A549 (cell line): ENCODE measurements at regions of chr14 and their contacts with region 1.

Region 1: DNA sequence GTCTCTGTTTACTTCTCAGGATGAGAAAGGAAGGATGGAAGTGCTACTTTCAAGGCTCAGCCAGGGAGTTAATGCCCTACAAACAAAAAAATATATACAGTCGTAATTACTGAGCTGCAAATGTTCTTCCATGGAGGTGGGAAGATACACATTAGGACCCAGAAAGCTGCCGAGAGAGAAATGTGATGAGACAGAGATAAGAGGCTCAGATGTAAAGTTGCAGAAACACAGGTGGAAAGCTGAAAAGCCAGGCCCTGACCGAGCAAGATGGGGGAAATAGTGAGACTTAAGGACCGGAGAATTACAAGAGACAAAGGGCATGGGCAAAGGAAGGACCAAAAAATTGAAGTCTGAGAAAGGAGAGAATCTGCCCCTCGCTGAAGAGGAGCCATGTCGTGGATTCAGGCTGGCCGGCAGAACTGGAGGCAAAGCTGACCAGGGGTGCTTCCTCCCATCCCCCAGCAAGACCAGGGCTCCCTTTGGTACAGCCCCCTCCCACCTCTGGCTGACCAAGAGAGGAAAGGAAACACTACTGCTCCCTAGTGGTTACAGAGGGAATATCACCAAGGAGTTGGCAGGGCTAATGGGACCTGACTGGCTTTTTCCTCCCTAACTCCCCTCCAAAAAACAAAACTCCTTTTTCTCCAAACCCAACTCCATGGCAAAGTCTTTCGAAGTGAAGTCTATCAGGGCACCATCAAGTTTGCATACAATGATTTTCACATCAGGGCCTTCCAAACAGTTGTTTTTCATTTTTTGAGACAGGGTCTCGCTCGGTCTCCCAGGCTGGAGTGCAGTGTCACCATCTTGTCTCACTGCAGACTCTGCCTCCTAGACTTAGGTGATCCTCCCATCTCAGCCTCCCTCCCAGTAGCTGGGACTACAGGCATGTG is 12.1 kb downstream of the ZFHX2 start:
- DNase-seq: peak; percentile 45 to 61
- ATAC-seq: peak; percentile 79 to 91; a peak in 5 of 6 replicates
- H3K4me3 ChIP-seq: no peak overlapping the region
- H3K27ac ChIP-seq: no peak overlapping the region
- H3K4me1 ChIP-seq: no peaks in the 10 kb centered on the region
- CTCF ChIP-seq: peak; percentile 59
- EP300 ChIP-seq: no peak
- POLR2A ChIP-seq: no peak
- RAD21 ChIP-seq: peak; percentile 37 to 51; a peak in 2 of 5 replicates

Region 2: GRCh38 chr14:23483236-23483854 is 56.1 kb before region 1 on chr14:
- CTCF ChIA-PET with region 1: interaction called, 74 read pairs
- POLR2A ChIA-PET with region 1: interaction called, 5 read pairs
- DNase-seq: peak; percentile 40 to 60
- ATAC-seq: peak; percentile 79 to 96
- H3K4me3 ChIP-seq: no peak overlapping the region
- H3K27ac ChIP-seq: no peak overlapping the region
- H3K4me1 ChIP-seq: no peaks in the 10 kb centered on the region
- CTCF ChIP-seq: peak; percentile 34; the same call in 2 of the 3 replicates
- EP300 ChIP-seq: no peak
- POLR2A ChIP-seq: no peak
- RAD21 ChIP-seq: peak in 1 of 2 experiments; percentile 67; a peak in 3 of 5 replicates

Region 3: DNA sequence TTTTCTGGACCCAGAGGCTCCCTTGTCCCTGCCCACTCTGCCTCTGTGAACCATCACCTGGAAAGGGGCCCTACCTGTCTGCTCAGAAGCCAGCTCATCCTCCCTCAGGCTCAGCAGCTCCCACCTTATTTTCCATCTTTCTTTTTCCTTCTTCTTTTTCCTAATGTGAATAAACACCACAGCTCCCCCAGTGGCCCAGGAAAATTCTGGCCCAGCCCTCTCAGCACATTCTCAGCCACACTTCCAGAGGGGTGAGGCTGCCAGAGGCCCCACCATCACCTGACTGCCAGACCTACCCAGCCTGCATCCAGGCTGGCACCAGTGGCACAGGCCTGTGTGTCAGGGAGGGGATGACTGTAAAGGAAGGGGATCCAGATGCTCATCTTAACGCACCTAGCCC is 10.9 kb before region 1 on chr14:
- CTCF ChIA-PET with region 1: interaction called, 34 read pairs
- POLR2A ChIA-PET with region 1: no interaction called
- DNase-seq: no peak
- ATAC-seq: peak; percentile 63 to 71; a peak in 5 of 6 replicates
- H3K4me3 ChIP-seq: no peak overlapping the region
- H3K27ac ChIP-seq: no peak overlapping the region
- H3K4me1 ChIP-seq: no peaks in the 10 kb centered on the region
- CTCF ChIP-seq: no peak
- EP300 ChIP-seq: no peak
- POLR2A ChIP-seq: no peak
- RAD21 ChIP-seq: no peak

Region 4: GRCh38 chr14:23605931-23606585 is 66.6 kb after region 1 on chr14:
- CTCF ChIA-PET with region 1: no interaction called
- POLR2A ChIA-PET with region 1: no interaction called
- DNase-seq: no peak
- ATAC-seq: no peak
- H3K4me3 ChIP-seq: no peak overlapping the region
- H3K27ac ChIP-seq: no peak overlapping the region
- H3K4me1 ChIP-seq: no peaks in the 10 kb centered on the region
- CTCF ChIP-seq: no peak
- EP300 ChIP-seq: no peak
- POLR2A ChIP-seq: no peak
- RAD21 ChIP-seq: no peak